ENCODE measurements at regions of chr12 and their contacts with region 1.

Region 1: DNA sequence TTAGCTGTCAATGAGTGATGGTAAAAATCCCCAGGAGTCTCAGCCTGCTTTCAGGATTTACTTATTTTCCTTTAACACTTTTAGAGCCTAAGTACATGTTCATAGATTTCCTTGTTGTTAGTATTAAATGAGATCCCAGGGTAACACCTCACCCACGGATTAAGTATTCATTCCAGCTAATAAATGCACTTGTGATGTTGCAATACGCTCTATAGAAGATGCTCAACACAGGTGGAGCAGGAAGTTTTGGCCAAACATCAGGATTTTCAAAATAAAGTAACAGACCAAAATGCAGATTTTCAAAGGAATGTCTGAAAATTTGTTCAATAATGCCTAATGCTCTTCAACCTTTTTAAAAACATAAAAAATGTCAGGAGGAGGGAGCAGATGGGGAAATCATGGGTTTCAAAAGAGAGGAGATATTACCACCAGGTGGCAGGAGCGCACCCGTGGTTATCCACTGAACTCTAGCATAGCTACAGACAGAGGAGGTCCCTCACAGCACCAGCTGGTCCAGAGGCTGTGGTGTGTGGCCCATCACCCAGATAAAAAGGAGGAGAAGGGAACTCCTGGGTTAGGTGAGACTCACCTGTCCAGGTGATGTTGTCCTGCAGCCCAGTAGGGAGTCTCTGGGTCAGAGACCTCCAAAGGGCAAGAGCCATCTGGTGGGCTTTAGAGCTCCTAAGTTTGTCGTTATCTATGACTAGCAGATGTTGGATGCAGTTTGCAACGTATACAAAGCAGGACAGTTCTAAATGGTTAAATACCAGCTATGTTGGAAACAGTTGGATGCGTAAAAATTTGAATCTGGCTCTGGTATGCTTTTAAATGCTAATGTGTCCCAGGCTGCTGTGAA is 1158.4 kb upstream of the TMEM132C start:
- DNase-seq: peak; percentile 15
- H3K4me3 Mint-ChIP-seq: no peak overlapping the region
- H3K27ac Mint-ChIP-seq: no peak overlapping the region
- H3K4me1 Mint-ChIP-seq: no peaks in the 10 kb centered on the region
- H3K27me3 Mint-ChIP-seq: no peaks in the 10 kb centered on the region

Region 2: GRCh38 chr12:126883697-126884096 is 224.9 kb before region 1 on chr12:
- intact Hi-C with region 1: no loop called
- DNase-seq: no peak
- H3K4me3 Mint-ChIP-seq: no peak overlapping the region
- H3K27ac Mint-ChIP-seq: no peak overlapping the region
- H3K4me1 Mint-ChIP-seq: no peaks in the 10 kb centered on the region
- H3K27me3 Mint-ChIP-seq: no peaks in the 10 kb centered on the region

Region 3: GRCh38 chr12:127205781-127206535 is 97.4 kb after region 1 on chr12:
- intact Hi-C with region 1: loop called (anchors 10 kb)
- DNase-seq: no peak
- H3K4me3 Mint-ChIP-seq: no peak overlapping the region
- H3K27ac Mint-ChIP-seq: no peak overlapping the region
- H3K4me1 Mint-ChIP-seq: no peaks in the 10 kb centered on the region
- H3K27me3 Mint-ChIP-seq: no peaks in the 10 kb centered on the region

Region 4: GRCh38 chr12:127293507-127294310 is 185.1 kb after region 1 on chr12:
- intact Hi-C with region 1: loop called (anchors 1 kb)
- DNase-seq: peak; percentile 24
- H3K4me3 Mint-ChIP-seq: no peak overlapping the region
- H3K27ac Mint-ChIP-seq: no peak overlapping the region
- H3K4me1 Mint-ChIP-seq: no peaks in the 10 kb centered on the region
- H3K27me3 Mint-ChIP-seq: no peaks in the 10 kb centered on the region